Body of pancreas (tissue), 4 donors: ENCODE measurements at regions of chr1 and their contacts with region 1.

Region 1: GRCh38 chr1:24201941-24202440 is 14.9 kb upstream of the IFNLR1 start:
- DNase-seq: peak; percentile 85 to 92 (median 90)
- ATAC-seq: peak; percentile 89
- H3K4me3 ChIP-seq: no peak overlapping the region
- H3K27ac ChIP-seq: peak overlapping the region in 2 of 4 donors; percentile 36 to 56
- H3K4me1 ChIP-seq: peaks cover 4% of the 10 kb centered on the region
- H3K27me3 ChIP-seq: no peaks in the 10 kb centered on the region
- CTCF ChIP-seq: peak; percentile 54 to 89 (median 78)
- POLR2A ChIP-seq: no peak

Region 2: DNA sequence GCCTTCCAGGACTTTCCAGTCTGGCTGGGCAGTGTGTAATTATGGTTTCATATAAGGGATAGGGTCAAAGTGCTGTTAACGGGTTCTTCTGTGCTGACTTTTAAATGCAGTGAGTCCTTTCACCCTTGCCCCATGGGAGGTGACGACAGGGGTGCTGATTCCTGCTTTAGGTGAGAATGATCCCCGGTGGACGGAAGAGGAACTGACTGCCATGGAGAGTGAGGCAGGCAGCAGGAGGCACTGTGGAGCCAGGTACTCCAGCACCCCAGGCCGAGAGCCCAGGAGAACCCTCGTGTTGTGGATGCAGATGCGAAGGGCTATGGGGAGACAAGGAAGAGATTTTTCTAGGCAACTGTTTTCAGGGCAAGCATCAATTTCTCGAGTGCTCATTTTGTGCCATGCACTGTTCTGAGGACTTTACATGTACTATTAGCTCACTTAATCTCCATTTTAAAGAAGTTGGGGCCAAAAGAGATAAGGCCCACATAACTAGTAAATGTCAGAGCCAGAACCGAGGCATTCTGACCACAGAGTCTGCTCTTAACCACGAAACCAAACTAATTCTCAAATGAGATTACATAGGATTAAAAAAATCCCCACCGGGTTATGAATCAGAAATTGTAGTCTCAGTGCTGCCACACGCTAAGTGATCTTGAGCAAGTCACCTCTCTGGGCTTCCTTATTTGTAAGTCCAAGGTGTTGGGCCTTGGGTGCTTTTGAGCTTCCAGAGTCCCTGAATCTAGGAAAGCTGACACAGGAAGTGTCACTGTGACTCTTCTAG is 183.4 kb after region 1 on chr1:
- intact Hi-C with region 1: loop called (anchors 5 kb)
- DNase-seq: no peak
- ATAC-seq: no peak
- H3K4me3 ChIP-seq: no peak overlapping the region
- H3K27ac ChIP-seq: no peak overlapping the region
- H3K4me1 ChIP-seq: peaks cover 5% of the 10 kb centered on the region
- H3K27me3 ChIP-seq: no peaks in the 10 kb centered on the region
- CTCF ChIP-seq: peak in 5 of 7 experiments; percentile 6 to 39 (median 32)
- POLR2A ChIP-seq: no peak